ENCODE measurements at regions of chr5 and their contacts with region 1.

Region 1: GRCh38 chr5:40755407-40756365 is at the start of gene TTC33:
- DNase-seq: peak; percentile 84 to 95 (median 91)
- ATAC-seq: peak; percentile 95
- H3K4me3 ChIP-seq: peak within 1 kb of the TSS; percentile 95
- H3K4me3 Mint-ChIP-seq: no peak within 1 kb of the TSS
- H3K27ac ChIP-seq: peak within 1 kb of the TSS; percentile 89
- H3K27ac Mint-ChIP-seq: peak within 1 kb of the TSS in 1 of 9 donors; percentile 32
- H3K4me1 ChIP-seq: peaks cover 9 to 11% of the 10 kb centered on the region in 2 donors
- H3K4me1 Mint-ChIP-seq: peaks cover 0 to 34% (median 17%) of the 10 kb centered on the region in 7 donors
- H3K27me3 ChIP-seq: no peaks in the 10 kb centered on the region
- H3K27me3 Mint-ChIP-seq: no peaks in the 10 kb centered on the region
- total RNA-seq, gene TTC33: 7.0 to 17.2 (median 14.0) TPM

Region 2: GRCh38 chr5:40404613-40405012 is 351.1 kb before region 1 on chr5:
- CTCF ChIA-PET with region 1: interaction called, 3 read pairs
- POLR2A ChIA-PET with region 1: no interaction called
- intact Hi-C with region 1: loop called in 1 of 2 experiments (anchors 10 kb)
- DNase-seq: peak in 7 of 9 donors; percentile 36 to 66 (median 60)
- ATAC-seq: peak; percentile 73
- H3K4me3 ChIP-seq: no peak overlapping the region
- H3K4me3 Mint-ChIP-seq: peak overlapping the region in 9 of 10 donors; percentile 34 to 83 (median 62)
- H3K27ac ChIP-seq: peak overlapping the region; percentile 99
- H3K27ac Mint-ChIP-seq: peak overlapping the region; percentile 95 to 100 (median 99)
- H3K4me1 ChIP-seq: peaks cover 48 to 50% of the 10 kb centered on the region in 2 donors
- H3K4me1 Mint-ChIP-seq: peaks cover 43 to 83% (median 80%) of the 10 kb centered on the region in 7 donors
- H3K27me3 ChIP-seq: no peaks in the 10 kb centered on the region
- H3K27me3 Mint-ChIP-seq: no peaks in the 10 kb centered on the region

Region 3: GRCh38 chr5:40774623-40775022 is 18.9 kb after region 1 on chr5:
- CTCF ChIA-PET with region 1: no interaction called
- POLR2A ChIA-PET with region 1: interaction called, 4 read pairs
- intact Hi-C with region 1: loop called in 1 of 2 experiments (anchors 2 kb)
- DNase-seq: no peak
- ATAC-seq: no peak
- H3K4me3 ChIP-seq: no peak overlapping the region
- H3K4me3 Mint-ChIP-seq: no peak overlapping the region
- H3K27ac ChIP-seq: no peak overlapping the region
- H3K27ac Mint-ChIP-seq: no peak overlapping the region
- H3K4me1 ChIP-seq: no peaks in the 10 kb centered on the region
- H3K4me1 Mint-ChIP-seq: peaks cover 7 to 12% (median 9%) of the 10 kb centered on the region in 7 donors
- H3K27me3 ChIP-seq: no peaks in the 10 kb centered on the region
- H3K27me3 Mint-ChIP-seq: no peaks in the 10 kb centered on the region

Region 4: GRCh38 chr5:40834849-40835787 is 79.4 kb after region 1 on chr5 and contains the start of gene RPL37:
- CTCF ChIA-PET with region 1: interaction called, 3 read pairs
- POLR2A ChIA-PET with region 1: interaction called, 11 read pairs
- intact Hi-C with region 1: loop called (anchors 1 kb)
- DNase-seq: peak; percentile 73 to 91 (median 88)
- ATAC-seq: peak; percentile 96
- H3K4me3 ChIP-seq: peak within 1 kb of the TSS; percentile 88
- H3K4me3 Mint-ChIP-seq: peak within 1 kb of the TSS; percentile 93 to 99 (median 98)
- H3K27ac ChIP-seq: peak within 1 kb of the TSS; percentile 92
- H3K27ac Mint-ChIP-seq: peak within 1 kb of the TSS; percentile 97 to 100 (median 99)
- H3K4me1 ChIP-seq: peaks cover 11 to 23% of the 10 kb centered on the region in 2 donors
- H3K4me1 Mint-ChIP-seq: peaks cover 21 to 58% (median 45%) of the 10 kb centered on the region in 7 donors
- H3K27me3 ChIP-seq: no peaks in the 10 kb centered on the region
- H3K27me3 Mint-ChIP-seq: no peaks in the 10 kb centered on the region
- total RNA-seq, gene RPL37: 1,642 to 2,808 (median 2,710) TPM

Region 5: GRCh38 chr5:41869739-41870626 is 1114.3 kb after region 1 on chr5 and contains the start of gene OXCT1:
- CTCF ChIA-PET with region 1: no interaction called
- POLR2A ChIA-PET with region 1: no interaction called
- intact Hi-C with region 1: loop called in 1 of 2 experiments (anchors 1 kb)
- DNase-seq: peak; percentile 88 to 96 (median 95)
- ATAC-seq: peak; percentile 97
- H3K4me3 ChIP-seq: peak within 1 kb of the TSS; percentile 91
- H3K4me3 Mint-ChIP-seq: peak within 1 kb of the TSS; percentile 85 to 94 (median 90)
- H3K27ac ChIP-seq: peak within 1 kb of the TSS; percentile 97
- H3K27ac Mint-ChIP-seq: peak within 1 kb of the TSS; percentile 89 to 98 (median 97)
- H3K4me1 ChIP-seq: peaks cover 16% of the 10 kb centered on the region in 2 donors
- H3K4me1 Mint-ChIP-seq: peaks cover 18 to 63% (median 57%) of the 10 kb centered on the region in 7 donors
- H3K27me3 ChIP-seq: no peaks in the 10 kb centered on the region
- H3K27me3 Mint-ChIP-seq: no peaks in the 10 kb centered on the region
- total RNA-seq, gene OXCT1: 18.6 to 53.1 (median 30.0) TPM

Measured in naive thymus-derived CD4-positive, alpha-beta T cell (primary cell).